CD4-positive, alpha-beta memory T cell (primary cell): ENCODE measurements at regions of chr16 and their contacts with region 1.

Region 1: DNA sequence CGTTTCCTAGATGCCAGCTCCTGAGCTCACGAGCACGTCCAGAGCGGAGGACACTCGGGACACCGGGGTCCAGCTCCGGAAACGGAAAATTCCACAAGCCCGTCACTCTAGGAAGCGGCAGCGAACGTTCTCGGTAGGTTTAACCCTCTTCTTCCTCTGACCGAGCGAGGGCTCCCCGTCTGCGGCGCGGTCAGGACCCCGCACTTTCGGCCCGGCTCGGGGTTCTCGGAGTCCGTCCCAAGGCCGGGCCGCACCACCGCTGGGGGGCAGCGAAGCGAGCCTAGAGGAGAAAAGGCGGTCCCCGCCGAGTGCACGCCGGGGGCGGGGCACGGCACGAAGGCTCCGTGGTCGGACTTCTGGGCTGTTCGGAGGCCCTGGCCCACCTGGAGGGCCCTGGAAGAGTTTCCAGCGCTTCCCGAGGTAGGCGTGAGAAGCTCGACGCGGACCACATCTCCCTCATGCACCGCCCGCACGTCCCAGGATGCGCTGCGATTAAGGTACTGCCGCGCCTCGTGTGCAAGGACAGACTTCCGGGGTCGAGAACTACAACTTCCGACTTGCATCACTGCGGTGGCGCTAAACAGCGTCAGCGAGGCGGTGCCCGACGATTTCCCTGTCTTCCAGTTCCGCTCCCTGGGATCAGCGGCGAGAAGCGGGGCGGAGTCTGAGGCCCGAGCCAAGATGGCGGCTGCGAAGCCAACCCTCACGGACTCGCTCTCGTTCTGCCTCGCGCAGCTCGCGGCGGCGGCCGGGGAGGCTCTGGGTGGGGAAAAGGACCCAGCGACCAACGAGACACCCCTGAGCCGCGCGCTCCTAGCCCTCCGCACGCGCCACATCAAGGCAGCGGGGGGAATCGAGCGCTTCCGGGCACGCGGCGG is at the start of gene ARMC5:
- DNase-seq: peak; percentile 98 to 99 (median 99)
- H3K4me3 ChIP-seq: peak within 1 kb of the TSS; percentile 79 to 95
- H3K4me3 Mint-ChIP-seq: peak within 1 kb of the TSS; percentile 91 to 95 (median 94)
- H3K27ac ChIP-seq: peak within 1 kb of the TSS; percentile 99
- H3K27ac Mint-ChIP-seq: peak within 1 kb of the TSS; percentile 94 to 99 (median 98)
- H3K4me1 ChIP-seq: peaks cover 53% of the 10 kb centered on the region
- H3K4me1 Mint-ChIP-seq: peaks cover 25 to 60% (median 37%) of the 10 kb centered on the region in 4 donors
- H3K27me3 ChIP-seq: no peaks in the 10 kb centered on the region
- H3K27me3 Mint-ChIP-seq: no peaks in the 10 kb centered on the region
- total RNA-seq, gene ARMC5: 6.5 to 7.0 TPM

Region 2: GRCh38 chr16:30698139-30698815 is 760.8 kb before region 1 on chr16:
- CTCF ChIA-PET with region 1: no interaction called
- POLR2A ChIA-PET with region 1: no interaction called
- intact Hi-C with region 1: loop called (anchors 1 kb)
- DNase-seq: peak; percentile 99 to 100 (median 100)
- H3K4me3 ChIP-seq: peak overlapping the region; percentile 61 to 71
- H3K4me3 Mint-ChIP-seq: peak overlapping the region; percentile 95 to 99 (median 96)
- H3K27ac ChIP-seq: peak overlapping the region; percentile 100
- H3K27ac Mint-ChIP-seq: peak overlapping the region; percentile 100
- H3K4me1 ChIP-seq: peaks cover 36% of the 10 kb centered on the region
- H3K4me1 Mint-ChIP-seq: peaks cover 22 to 44% (median 32%) of the 10 kb centered on the region in 4 donors
- H3K27me3 ChIP-seq: no peaks in the 10 kb centered on the region
- H3K27me3 Mint-ChIP-seq: peaks cover 0 to 3% of the 10 kb centered on the region in 2 donors

Region 3: DNA sequence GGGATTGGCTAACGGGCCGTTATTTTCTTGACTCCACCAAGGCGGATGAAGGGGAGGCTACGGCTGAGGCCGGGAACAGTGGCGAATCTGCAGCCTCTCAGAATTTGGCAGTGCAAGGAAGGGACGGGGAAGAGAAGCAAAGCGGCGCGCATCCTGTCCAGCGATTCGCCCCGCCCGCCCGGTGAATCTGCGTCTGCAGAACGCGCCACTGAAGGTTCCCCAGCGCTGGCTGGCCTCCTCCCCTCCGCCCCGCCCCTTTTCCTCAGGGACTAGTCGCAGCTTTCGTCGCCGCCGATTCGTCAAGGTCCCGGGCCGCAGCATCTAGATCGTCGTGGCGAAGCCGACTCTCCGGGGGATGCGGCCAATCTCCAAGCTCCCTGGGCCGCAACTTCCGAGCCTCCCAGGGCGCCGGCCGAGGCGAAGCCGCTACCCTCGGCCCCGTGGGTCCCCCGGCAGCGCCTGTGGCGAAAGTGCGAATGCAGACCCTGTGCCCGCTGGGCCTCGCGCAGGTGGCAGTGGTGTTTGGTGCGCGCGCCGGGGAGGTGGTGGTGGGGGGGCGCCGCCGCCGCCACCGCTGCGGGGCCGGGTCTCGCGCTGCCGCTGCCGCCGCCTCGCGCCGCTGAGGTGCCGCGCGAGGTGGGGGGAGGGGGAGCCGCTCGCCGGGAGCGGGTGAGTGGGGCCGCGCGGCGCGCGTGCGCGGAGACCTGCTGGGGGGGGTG is 501.5 kb before region 1 on chr16 and contains the start of gene SETD1A:
- CTCF ChIA-PET with region 1: interaction called, 4 read pairs
- POLR2A ChIA-PET with region 1: interaction called, 6 read pairs
- intact Hi-C with region 1: loop called (anchors 1 kb)
- DNase-seq: peak; percentile 97 to 98 (median 98)
- H3K4me3 ChIP-seq: peak within 1 kb of the TSS; percentile 85 to 95
- H3K4me3 Mint-ChIP-seq: peak within 1 kb of the TSS; percentile 95 to 99 (median 96)
- H3K27ac ChIP-seq: peak within 1 kb of the TSS; percentile 92
- H3K27ac Mint-ChIP-seq: peak within 1 kb of the TSS; percentile 98 to 100 (median 99)
- H3K4me1 ChIP-seq: peaks cover 30% of the 10 kb centered on the region
- H3K4me1 Mint-ChIP-seq: peaks cover 13 to 43% (median 31%) of the 10 kb centered on the region in 4 donors
- H3K27me3 ChIP-seq: no peaks in the 10 kb centered on the region
- H3K27me3 Mint-ChIP-seq: peaks cover 0 to 4% of the 10 kb centered on the region in 2 donors
- total RNA-seq, gene SETD1A: 32.1 to 33.2 TPM

Region 4: GRCh38 chr16:31094424-31095120 is 364.5 kb before region 1 on chr16 and contains the start of gene VKORC1:
- CTCF ChIA-PET with region 1: no interaction called
- POLR2A ChIA-PET with region 1: no interaction called
- intact Hi-C with region 1: no loop called
- DNase-seq: peak; percentile 87 to 92 (median 90)
- H3K4me3 ChIP-seq: peak within 1 kb of the TSS; percentile 63 to 98
- H3K4me3 Mint-ChIP-seq: peak within 1 kb of the TSS; percentile 88 to 96 (median 92)
- H3K27ac ChIP-seq: peak within 1 kb of the TSS; percentile 74
- H3K27ac Mint-ChIP-seq: peak within 1 kb of the TSS; percentile 76 to 99 (median 95)
- H3K4me1 ChIP-seq: peaks cover 22% of the 10 kb centered on the region
- H3K4me1 Mint-ChIP-seq: peaks cover 12 to 42% (median 30%) of the 10 kb centered on the region in 4 donors
- H3K27me3 ChIP-seq: no peaks in the 10 kb centered on the region
- H3K27me3 Mint-ChIP-seq: no peaks in the 10 kb centered on the region
- total RNA-seq, gene VKORC1: 48.9 to 51.3 TPM

Region 5: GRCh38 chr16:31117391-31118197 is 341.5 kb before region 1 on chr16 and contains the start of gene KAT8:
- CTCF ChIA-PET with region 1: no interaction called
- POLR2A ChIA-PET with region 1: interaction called, 13 read pairs
- intact Hi-C with region 1: loop called (anchors 1 kb)
- DNase-seq: peak; percentile 98 to 99 (median 98)
- H3K4me3 ChIP-seq: peak within 1 kb of the TSS; percentile 63 to 76
- H3K4me3 Mint-ChIP-seq: peak within 1 kb of the TSS; percentile 83 to 93 (median 89)
- H3K27ac ChIP-seq: peak within 1 kb of the TSS; percentile 89
- H3K27ac Mint-ChIP-seq: peak within 1 kb of the TSS; percentile 80 to 98 (median 95)
- H3K4me1 ChIP-seq: peaks cover 11% of the 10 kb centered on the region
- H3K4me1 Mint-ChIP-seq: peaks cover 9 to 19% (median 13%) of the 10 kb centered on the region in 4 donors
- H3K27me3 ChIP-seq: no peaks in the 10 kb centered on the region
- H3K27me3 Mint-ChIP-seq: no peaks in the 10 kb centered on the region
- total RNA-seq, gene KAT8: 90.8 to 94.2 TPM

Region 6: GRCh38 chr16:31395647-31396046 is 63.4 kb before region 1 on chr16:
- CTCF ChIA-PET with region 1: no interaction called
- POLR2A ChIA-PET with region 1: no interaction called
- intact Hi-C with region 1: no loop called
- DNase-seq: no peak
- H3K4me3 ChIP-seq: no peak overlapping the region
- H3K4me3 Mint-ChIP-seq: no peak overlapping the region
- H3K27ac ChIP-seq: no peak overlapping the region
- H3K27ac Mint-ChIP-seq: no peak overlapping the region
- H3K4me1 ChIP-seq: no peaks in the 10 kb centered on the region
- H3K4me1 Mint-ChIP-seq: peaks cover 3 to 15% (median 8%) of the 10 kb centered on the region in 4 donors
- H3K27me3 ChIP-seq: no peaks in the 10 kb centered on the region
- H3K27me3 Mint-ChIP-seq: peaks cover 0 to 6% of the 10 kb centered on the region in 2 donors

Region 7: DNA sequence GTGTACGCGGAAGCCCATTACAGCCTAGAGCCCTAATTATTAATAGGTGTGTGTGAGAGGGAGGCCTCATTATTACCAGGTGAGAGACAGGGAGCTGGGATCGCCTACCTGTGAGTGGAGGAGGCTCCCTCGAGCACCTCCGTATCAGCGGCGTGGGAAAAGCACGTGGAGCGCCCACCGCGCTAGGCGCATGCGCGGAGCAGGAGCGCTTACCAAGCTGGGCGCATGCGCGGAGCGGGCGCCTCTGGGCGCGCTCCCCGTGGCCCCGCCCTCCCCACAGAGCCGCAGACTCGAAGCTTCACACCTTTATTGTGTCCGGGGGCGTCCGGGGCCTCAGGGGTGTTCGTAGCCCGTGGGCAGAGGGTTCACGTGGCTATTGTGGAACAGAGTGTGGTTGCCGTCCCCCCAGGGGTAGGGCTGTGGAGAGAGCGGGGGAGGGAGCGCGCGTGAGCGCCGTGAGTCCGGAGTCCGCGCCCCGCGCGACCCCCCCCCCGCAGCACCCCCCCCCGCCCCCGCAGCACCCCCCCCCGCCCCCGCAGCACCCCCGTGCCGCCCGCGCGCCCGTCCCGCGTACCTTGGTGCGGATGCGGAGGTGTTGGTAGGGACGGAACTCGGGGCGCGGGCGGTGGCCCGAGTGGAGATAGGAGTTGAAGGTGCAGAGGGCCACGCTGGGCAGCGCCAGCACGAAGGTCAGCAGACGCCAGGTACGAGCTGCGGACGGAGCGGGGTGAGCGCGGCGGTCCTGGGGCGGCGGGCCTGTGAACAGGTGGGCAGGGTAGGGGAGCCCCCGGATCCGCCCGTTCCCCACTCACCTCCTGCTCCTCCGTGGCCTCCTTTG is 31.4 kb before region 1 on chr16:
- CTCF ChIA-PET with region 1: no interaction called
- POLR2A ChIA-PET with region 1: interaction called, 12 read pairs
- intact Hi-C with region 1: no loop called
- DNase-seq: peak; percentile 51 to 70 (median 59)
- H3K4me3 ChIP-seq: no peak overlapping the region
- H3K4me3 Mint-ChIP-seq: peak overlapping the region in 5 of 8 donors; percentile 29 to 57 (median 48)
- H3K27ac ChIP-seq: no peak overlapping the region
- H3K27ac Mint-ChIP-seq: no peak overlapping the region
- H3K4me1 ChIP-seq: peaks cover 4% of the 10 kb centered on the region
- H3K4me1 Mint-ChIP-seq: peaks cover 1 to 10% (median 7%) of the 10 kb centered on the region in 4 donors
- H3K27me3 ChIP-seq: no peaks in the 10 kb centered on the region
- H3K27me3 Mint-ChIP-seq: no peaks in the 10 kb centered on the region

Region 8: DNA sequence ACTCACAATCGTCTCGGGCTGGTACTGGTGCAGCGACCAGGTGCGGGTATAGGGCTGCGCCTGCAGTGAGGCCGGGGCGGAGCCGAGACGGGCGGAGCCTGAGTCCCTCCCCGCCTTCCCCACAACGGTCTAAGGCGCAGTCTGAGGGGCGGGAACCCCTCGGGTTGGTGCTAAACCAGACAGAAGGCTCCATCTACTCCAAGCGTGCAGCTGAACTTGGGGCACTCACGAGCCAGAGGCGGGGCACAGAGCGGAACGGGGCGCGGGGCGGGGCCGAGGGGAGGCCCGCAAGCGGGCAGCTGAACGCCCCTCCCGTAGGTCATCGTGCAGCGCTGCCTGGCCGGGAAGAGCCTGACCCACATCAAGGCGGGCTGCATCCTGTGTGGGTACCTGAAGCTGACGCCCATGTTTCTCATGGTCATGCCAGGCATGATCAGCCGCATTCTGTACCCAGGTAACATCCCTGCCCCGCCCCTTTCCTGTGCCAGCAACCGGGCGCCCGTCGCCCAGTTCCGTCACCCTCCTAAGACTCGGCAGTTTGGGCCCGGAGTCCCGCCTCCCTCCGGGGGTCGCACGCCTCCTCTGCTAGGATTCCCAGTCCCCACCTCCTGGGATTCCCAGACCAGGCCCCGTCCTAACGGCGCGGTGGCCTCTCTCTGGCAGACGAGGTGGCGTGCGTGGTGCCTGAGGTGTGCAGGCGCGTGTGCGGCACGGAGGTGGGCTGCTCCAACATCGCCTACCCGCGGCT is 28.8 kb after region 1 on chr16:
- CTCF ChIA-PET with region 1: interaction called, 34 read pairs
- POLR2A ChIA-PET with region 1: interaction called, 69 read pairs
- intact Hi-C with region 1: loop called (anchors 1 kb)
- DNase-seq: peak; percentile 77 to 90 (median 80)
- H3K4me3 ChIP-seq: peak overlapping the region; percentile 61 to 77
- H3K4me3 Mint-ChIP-seq: peak overlapping the region; percentile 89 to 95 (median 92)
- H3K27ac ChIP-seq: peak overlapping the region; percentile 39
- H3K27ac Mint-ChIP-seq: peak overlapping the region; percentile 71 to 94 (median 92)
- H3K4me1 ChIP-seq: peaks cover 13% of the 10 kb centered on the region
- H3K4me1 Mint-ChIP-seq: peaks cover 2 to 33% (median 16%) of the 10 kb centered on the region in 4 donors
- H3K27me3 ChIP-seq: no peaks in the 10 kb centered on the region
- H3K27me3 Mint-ChIP-seq: no peaks in the 10 kb centered on the region

Region 9: GRCh38 chr16:31713071-31713944 is 254.2 kb after region 1 on chr16:
- CTCF ChIA-PET with region 1: interaction called, 3 read pairs
- POLR2A ChIA-PET with region 1: interaction called, 26 read pairs
- intact Hi-C with region 1: loop called (anchors 5 kb)
- DNase-seq: peak; percentile 87 to 94 (median 88)
- H3K4me3 ChIP-seq: peak overlapping the region; percentile 64 to 87
- H3K4me3 Mint-ChIP-seq: peak overlapping the region; percentile 99 to 100 (median 100)
- H3K27ac ChIP-seq: peak overlapping the region; percentile 91
- H3K27ac Mint-ChIP-seq: peak overlapping the region; percentile 95 to 99 (median 99)
- H3K4me1 ChIP-seq: peaks cover 33% of the 10 kb centered on the region
- H3K4me1 Mint-ChIP-seq: peaks cover 30 to 62% (median 54%) of the 10 kb centered on the region in 4 donors
- H3K27me3 ChIP-seq: no peaks in the 10 kb centered on the region
- H3K27me3 Mint-ChIP-seq: no peaks in the 10 kb centered on the region